Caco-2 (cell line): ENCODE measurements at regions of chr7 and their contacts with region 1.

Region 1: DNA sequence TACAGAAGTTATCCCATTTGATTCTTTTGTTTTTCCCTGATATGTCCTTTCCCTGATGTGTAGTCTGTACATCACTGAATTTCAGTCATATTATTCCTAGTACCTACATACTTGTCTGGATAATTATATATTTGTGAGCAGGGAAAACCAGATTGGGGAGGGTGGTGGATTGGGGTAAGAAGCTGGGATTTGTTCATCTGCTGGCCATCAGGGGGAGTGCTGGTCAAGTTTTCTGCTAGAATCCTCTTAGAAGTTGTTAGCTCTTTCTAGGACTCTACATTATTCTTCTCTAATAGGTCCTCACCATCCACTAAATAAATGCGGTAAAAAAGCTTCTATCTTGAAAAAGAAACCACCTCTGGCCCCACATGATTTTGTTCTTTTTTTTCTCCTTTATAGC is 232.7 kb upstream of the TAC1 start:
- DNase-seq: peak; percentile 43 to 51
- H3K4me3 ChIP-seq: no peak overlapping the region
- H3K4me3 Mint-ChIP-seq: no peak overlapping the region
- H3K27ac Mint-ChIP-seq: no peak overlapping the region
- H3K4me1 ChIP-seq: no peaks in the 10 kb centered on the region
- H3K4me1 Mint-ChIP-seq: no peaks in the 10 kb centered on the region
- H3K27me3 ChIP-seq: no peaks in the 10 kb centered on the region
- H3K27me3 Mint-ChIP-seq: peaks cover 7% of the 10 kb centered on the region
- CTCF ChIP-seq: peak; percentile 52 to 76

Region 2: GRCh38 chr7:97835296-97836138 is 336.3 kb after region 1 on chr7:
- CTCF ChIA-PET with region 1: interaction called, 8 read pairs
- POLR2A ChIA-PET with region 1: no interaction called
- intact Hi-C with region 1: loop called (anchors 1 kb)
- DNase-seq: peak; percentile 62 to 71
- H3K4me3 ChIP-seq: no peak overlapping the region
- H3K4me3 Mint-ChIP-seq: no peak overlapping the region
- H3K27ac Mint-ChIP-seq: no peak overlapping the region
- H3K4me1 ChIP-seq: no peaks in the 10 kb centered on the region
- H3K4me1 Mint-ChIP-seq: no peaks in the 10 kb centered on the region
- H3K27me3 ChIP-seq: no peaks in the 10 kb centered on the region
- H3K27me3 Mint-ChIP-seq: peaks cover 9% of the 10 kb centered on the region
- CTCF ChIP-seq: peak; percentile 60 to 69

Region 3: DNA sequence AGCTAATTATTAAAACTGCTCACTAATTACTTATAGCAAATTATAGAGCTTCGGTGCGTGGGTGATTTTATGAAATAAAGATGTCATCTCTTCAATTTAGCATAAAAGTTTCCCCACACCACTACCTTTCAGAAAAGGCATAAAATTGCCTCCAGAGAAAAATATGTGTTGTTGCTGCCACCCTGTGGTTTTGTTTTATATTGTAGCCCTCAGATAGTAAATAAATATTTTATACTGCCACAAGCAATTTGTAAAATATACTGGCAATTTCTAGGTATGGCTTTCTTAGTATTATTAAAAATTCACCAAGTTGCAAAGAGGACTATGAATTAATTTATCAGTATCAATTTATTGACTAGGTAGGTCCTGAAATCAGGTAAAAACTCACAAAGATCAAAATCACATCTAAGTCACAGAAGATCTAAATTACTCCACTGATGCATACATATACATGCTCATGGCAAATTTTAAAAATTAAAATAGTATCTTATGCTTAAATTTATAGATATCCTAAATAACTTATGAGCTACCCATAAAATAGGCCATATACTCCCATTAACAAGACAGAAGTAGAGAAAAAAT is 346.5 kb after region 1 on chr7:
- CTCF ChIA-PET with region 1: no interaction called
- POLR2A ChIA-PET with region 1: no interaction called
- intact Hi-C with region 1: loop called (anchors 1 kb)
- DNase-seq: peak in 1 of 2 experiments; percentile 24
- H3K4me3 ChIP-seq: no peak overlapping the region
- H3K4me3 Mint-ChIP-seq: no peak overlapping the region
- H3K27ac Mint-ChIP-seq: no peak overlapping the region
- H3K4me1 ChIP-seq: no peaks in the 10 kb centered on the region
- H3K4me1 Mint-ChIP-seq: no peaks in the 10 kb centered on the region
- H3K27me3 ChIP-seq: no peaks in the 10 kb centered on the region
- H3K27me3 Mint-ChIP-seq: no peaks in the 10 kb centered on the region
- CTCF ChIP-seq: peak; percentile 16 to 40